Sciatic nerve (tissue), 2 donors: ENCODE measurements at regions of chr14 and their contacts with region 1.

Region 1: GRCh38 chr14:95993768-95994592 is 45.2 kb upstream of the C14orf132 start:
- DNase-seq: no peak
- ATAC-seq: peak; percentile 26

Region 2: DNA sequence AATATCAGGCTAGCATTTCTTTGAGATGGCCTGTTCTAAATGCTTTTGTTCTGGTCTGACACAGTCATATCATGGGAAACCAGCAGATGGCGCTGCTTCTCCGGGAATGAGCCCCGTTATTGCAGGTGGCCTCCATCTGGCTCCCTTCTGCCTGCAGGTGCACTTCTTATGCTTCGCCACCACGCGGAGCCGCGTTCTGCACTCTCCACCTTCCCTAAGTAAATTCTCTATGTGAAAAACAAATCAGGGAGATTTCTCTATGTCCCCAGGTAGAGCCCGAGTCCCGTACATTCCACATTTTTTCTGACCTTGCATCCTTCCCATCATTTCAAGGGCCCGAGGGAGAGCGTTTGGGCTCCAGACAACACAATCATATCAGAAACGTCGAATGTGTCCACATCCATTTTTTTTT is 433.0 kb before region 1 on chr14:
- intact Hi-C with region 1: loop called (anchors 5 kb)
- DNase-seq: peak; percentile 91
- ATAC-seq: peak; percentile 85

Region 3: DNA sequence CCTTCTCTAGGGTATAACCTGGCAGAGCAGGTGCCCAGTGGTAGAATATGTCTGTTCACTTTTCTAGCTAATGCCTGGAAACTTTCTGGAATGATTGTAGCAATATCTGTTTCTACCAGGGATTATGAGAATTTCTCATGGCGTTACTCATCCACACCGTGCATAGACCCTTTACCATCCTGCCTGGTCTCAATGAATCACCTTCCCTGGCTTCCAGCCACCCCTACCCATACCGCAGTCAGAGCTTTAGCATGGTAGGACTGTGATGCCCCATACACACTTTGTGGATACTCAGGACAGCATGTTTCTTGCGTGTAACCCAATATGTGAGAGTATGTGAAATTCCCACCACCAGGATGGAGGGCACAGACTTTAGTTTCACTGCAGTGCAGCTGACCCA is 71.9 kb before region 1 on chr14:
- intact Hi-C with region 1: no loop called
- DNase-seq: no peak
- ATAC-seq: no peak